Activated CD4-positive, alpha-beta memory T cell treated with anti-CD3 and anti-CD28 coated beads for 36 hours (primary cell): ENCODE measurements at regions of chr1 and their contacts with region 1.

Region 1: DNA sequence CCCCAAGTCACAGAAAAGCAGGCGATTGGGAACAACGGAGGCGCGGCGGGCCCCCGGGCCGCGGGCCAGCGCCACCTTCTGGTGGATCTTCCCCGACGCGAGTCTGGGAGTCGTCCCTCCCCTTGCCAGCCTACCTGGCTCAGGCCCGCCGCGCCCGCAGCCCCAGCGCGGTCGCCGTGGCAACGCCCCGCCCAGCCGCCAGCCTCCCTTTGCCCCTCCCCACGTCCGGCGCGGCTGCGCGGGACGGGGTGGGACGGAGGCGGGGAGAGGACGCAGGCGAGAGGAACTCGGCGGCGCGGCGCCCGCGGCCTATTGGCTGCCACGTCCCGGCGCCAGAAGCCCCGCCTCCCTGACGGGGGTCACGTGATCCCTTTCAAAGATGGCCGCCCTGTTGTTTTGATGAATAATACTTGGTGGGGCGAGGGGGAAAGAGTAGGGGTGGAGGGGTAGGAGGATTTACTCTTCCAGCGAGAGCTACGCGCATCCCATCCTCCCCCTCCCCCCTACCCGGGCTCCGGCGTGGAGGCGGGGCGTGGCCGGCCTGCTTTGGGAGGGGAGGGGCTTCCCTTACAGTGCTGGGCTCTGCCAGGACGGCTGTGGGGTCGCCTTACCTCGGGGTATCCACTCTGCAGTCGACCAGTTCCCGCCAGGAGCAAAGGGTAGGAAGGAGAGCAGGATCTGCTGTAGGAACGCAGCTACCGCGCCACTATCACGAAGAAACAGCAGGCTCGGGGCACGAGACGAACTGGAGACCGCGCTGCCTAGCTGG is at the start of gene UBE4B:
- DNase-seq: peak; percentile 99
- H3K4me3 Mint-ChIP-seq: peak within 1 kb of the TSS; percentile 95
- H3K27ac Mint-ChIP-seq: peak within 1 kb of the TSS; percentile 89
- H3K4me1 Mint-ChIP-seq: peaks cover 23% of the 10 kb centered on the region
- H3K27me3 Mint-ChIP-seq: no peaks in the 10 kb centered on the region
- total RNA-seq, gene UBE4B: 24.3 to 25.3 TPM

Region 2: GRCh38 chr1:9874959-9875635 is 157.7 kb before region 1 on chr1:
- CTCF ChIA-PET with region 1: no interaction called
- POLR2A ChIA-PET with region 1: no interaction called
- intact Hi-C with region 1: loop called (anchors 2 kb)
- DNase-seq: peak; percentile 83
- H3K4me3 Mint-ChIP-seq: no peak overlapping the region
- H3K27ac Mint-ChIP-seq: no peak overlapping the region
- H3K4me1 Mint-ChIP-seq: peaks cover 4% of the 10 kb centered on the region
- H3K27me3 Mint-ChIP-seq: no peaks in the 10 kb centered on the region

Region 3: GRCh38 chr1:9942939-9943788 is 89.6 kb before region 1 on chr1 and contains the starts of genes LZIC and NMNAT1:
- CTCF ChIA-PET with region 1: interaction called, 6 read pairs
- POLR2A ChIA-PET with region 1: interaction called, 6 read pairs
- intact Hi-C with region 1: loop called (anchors 1 kb)
- DNase-seq: peak; percentile 96
- H3K4me3 Mint-ChIP-seq: peak within 1 kb of the TSS; percentile 99
- H3K27ac Mint-ChIP-seq: peak within 1 kb of the TSS; percentile 91
- H3K4me1 Mint-ChIP-seq: peaks cover 20% of the 10 kb centered on the region
- H3K27me3 Mint-ChIP-seq: no peaks in the 10 kb centered on the region
- total RNA-seq, gene LZIC: 22.0 to 22.8 TPM
- total RNA-seq, gene NMNAT1: 7.8 to 9.9 TPM

Region 4: DNA sequence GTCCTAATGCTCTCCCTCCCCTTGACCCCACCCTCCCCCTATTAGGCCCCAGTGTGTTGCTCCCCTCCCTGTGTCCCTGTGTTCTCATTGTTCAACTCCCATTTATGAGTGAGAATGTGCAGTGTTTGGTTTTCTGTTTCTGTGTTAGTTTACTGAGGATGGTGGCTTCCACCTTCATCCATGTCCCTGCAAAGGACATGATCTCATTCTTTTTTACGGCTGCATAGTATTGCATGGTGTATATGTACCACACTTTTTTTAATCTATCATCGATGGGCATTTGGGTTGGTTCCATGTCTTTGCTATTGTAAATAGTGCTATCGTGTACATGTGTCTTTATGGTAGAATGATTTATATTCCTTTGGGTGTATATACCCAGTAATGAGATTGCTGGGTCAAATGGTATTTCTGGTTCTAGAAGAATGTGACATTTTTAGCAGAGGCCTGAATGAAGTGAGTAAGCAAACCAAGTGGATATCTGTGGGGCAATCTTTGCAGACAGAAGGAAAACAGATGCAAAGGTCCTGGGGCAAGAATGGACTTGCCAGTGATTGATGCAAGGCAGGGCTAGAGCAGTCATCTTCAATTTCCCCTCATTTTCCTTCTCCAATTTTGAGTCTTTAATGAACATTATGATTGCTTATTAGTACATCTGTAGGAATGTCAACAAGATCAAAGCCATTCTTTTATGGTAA is 50.2 kb after region 1 on chr1:
- CTCF ChIA-PET with region 1: no interaction called
- POLR2A ChIA-PET with region 1: no interaction called
- intact Hi-C with region 1: no loop called
- DNase-seq: no peak
- H3K4me3 Mint-ChIP-seq: no peak overlapping the region
- H3K27ac Mint-ChIP-seq: no peak overlapping the region
- H3K4me1 Mint-ChIP-seq: no peaks in the 10 kb centered on the region
- H3K27me3 Mint-ChIP-seq: no peaks in the 10 kb centered on the region

Region 5: GRCh38 chr1:10398734-10399623 is 366.2 kb after region 1 on chr1 and contains the start of gene PGD:
- CTCF ChIA-PET with region 1: no interaction called
- POLR2A ChIA-PET with region 1: no interaction called
- intact Hi-C with region 1: loop called (anchors 2 kb)
- DNase-seq: peak; percentile 99
- H3K4me3 Mint-ChIP-seq: peak within 1 kb of the TSS; percentile 88
- H3K27ac Mint-ChIP-seq: peak within 1 kb of the TSS; percentile 55
- H3K4me1 Mint-ChIP-seq: peaks cover 25% of the 10 kb centered on the region
- H3K27me3 Mint-ChIP-seq: no peaks in the 10 kb centered on the region
- total RNA-seq, gene PGD: 94.6 to 96.7 TPM